Calu3 (cell line): ENCODE measurements at regions of chr14 and their contacts with region 1.

Region 1: GRCh38 chr14:50773632-50774541 is 57.1 kb downstream of the NIN start:
- DNase-seq: peak; percentile 56
- H3K4me3 Mint-ChIP-seq: no peak overlapping the region
- H3K27ac Mint-ChIP-seq: no peak overlapping the region
- H3K4me1 Mint-ChIP-seq: no peaks in the 10 kb centered on the region
- H3K27me3 Mint-ChIP-seq: no peaks in the 10 kb centered on the region
- CTCF ChIP-seq: peak; percentile 68

Region 2: DNA sequence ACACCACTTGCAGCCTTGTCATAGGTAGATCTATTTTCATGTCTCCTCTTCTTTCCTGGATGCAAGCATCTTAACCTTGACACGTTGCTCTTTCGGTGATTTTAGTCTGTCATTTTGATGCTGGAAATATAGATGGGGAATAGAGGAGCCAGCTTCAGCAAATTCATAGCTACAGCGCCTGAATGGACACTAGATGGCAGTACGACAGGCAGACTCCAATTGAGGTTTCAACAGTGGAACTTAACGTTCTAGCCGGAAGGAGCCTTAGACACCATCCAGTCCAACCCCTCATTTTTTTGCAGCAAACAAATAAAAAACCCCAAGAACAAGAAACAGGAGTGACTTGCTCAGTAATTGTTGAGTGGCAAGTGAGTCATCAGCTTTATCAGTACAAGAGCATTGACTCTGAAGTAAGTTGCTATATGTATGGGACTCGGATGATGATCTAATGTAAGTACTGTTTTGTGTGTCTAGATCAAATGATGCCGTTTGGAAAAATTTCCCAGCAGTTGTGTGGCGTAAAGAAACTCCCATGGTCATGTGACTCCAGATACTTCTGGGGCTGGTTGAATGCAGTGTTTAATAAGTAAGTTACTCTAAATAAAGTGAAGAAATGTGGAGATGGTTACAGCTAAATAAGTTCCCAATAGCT is 452.8 kb before region 1 on chr14:
- CTCF ChIA-PET with region 1: interaction called, 3 read pairs
- intact Hi-C with region 1: loop called (anchors 5 kb)
- DNase-seq: peak; percentile 65
- H3K4me3 Mint-ChIP-seq: no peak overlapping the region
- H3K27ac Mint-ChIP-seq: no peak overlapping the region
- H3K4me1 Mint-ChIP-seq: peaks cover 14% of the 10 kb centered on the region
- H3K27me3 Mint-ChIP-seq: no peaks in the 10 kb centered on the region
- CTCF ChIP-seq: peak; percentile 49

Region 3: DNA sequence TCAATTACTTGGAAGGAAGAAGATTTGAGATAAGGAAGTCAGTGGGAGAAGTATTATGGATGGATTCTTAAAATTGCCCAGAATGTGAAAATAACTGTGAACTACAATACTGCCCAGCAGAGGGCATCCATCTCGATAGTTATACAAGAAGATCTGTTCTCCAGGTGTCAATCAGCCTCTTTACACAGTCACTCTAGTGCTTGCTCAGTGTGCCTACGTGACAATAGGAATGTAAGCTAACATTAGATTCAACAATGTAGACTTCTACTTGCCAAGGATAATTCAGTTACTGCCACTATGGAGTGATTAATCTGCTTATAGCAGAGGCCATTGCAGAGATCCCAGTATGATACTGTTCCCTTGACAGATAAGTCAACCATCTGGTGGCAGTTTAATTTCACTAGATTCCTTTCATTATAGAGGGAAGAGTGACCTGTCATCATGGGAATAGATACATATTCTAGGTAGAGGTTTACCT is 230.9 kb before region 1 on chr14:
- CTCF ChIA-PET with region 1: interaction called, 3 read pairs
- intact Hi-C with region 1: loop called (anchors 1 kb)
- DNase-seq: peak; percentile 38
- H3K4me3 Mint-ChIP-seq: no peak overlapping the region
- H3K27ac Mint-ChIP-seq: no peak overlapping the region
- H3K4me1 Mint-ChIP-seq: peaks cover 32% of the 10 kb centered on the region
- H3K27me3 Mint-ChIP-seq: no peaks in the 10 kb centered on the region
- CTCF ChIP-seq: no peak

Region 4: DNA sequence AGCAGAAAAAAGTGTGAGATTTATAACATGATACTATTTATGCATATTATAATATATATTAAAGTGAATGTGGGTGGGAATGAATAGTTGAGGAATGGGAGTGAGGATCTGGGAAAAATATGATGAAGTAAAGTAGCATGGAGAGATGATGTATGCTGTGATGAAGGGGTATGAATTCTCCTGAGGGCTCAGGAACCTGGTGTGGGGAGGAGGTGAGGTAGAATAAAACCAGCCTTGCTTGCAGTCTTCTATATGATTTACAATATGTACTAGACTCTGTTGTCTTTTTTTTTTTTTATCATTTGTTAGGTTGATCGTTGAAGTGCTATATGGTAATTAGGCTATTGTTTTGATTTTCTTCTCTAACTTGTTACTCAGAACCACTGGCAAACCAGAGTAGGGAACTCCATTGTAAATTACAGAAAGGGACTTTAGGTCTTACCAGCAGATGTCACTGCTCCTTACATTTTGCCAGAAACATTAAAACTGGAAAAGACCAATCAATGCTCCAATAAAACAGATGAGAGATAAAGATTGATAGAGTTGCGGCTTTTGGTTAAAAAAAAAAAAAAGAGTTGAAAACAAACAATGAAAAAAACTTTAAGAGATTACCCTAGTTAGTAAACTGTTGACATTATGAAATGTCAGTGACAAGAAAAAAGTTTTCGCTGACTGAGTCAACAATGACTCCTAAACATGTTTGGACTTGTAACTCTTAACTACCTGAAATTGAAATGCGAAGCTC is 174.0 kb before region 1 on chr14:
- CTCF ChIA-PET with region 1: interaction called, 9 read pairs
- intact Hi-C with region 1: loop called (anchors 1 kb)
- DNase-seq: no peak
- H3K4me3 Mint-ChIP-seq: no peak overlapping the region
- H3K27ac Mint-ChIP-seq: no peak overlapping the region
- H3K4me1 Mint-ChIP-seq: no peaks in the 10 kb centered on the region
- H3K27me3 Mint-ChIP-seq: no peaks in the 10 kb centered on the region
- CTCF ChIP-seq: no peak

Region 5: GRCh38 chr14:50619556-50620141 is 154.2 kb before region 1 on chr14:
- CTCF ChIA-PET with region 1: interaction called, 4 read pairs
- intact Hi-C with region 1: loop called (anchors 1 kb)
- DNase-seq: no peak
- H3K4me3 Mint-ChIP-seq: no peak overlapping the region
- H3K27ac Mint-ChIP-seq: no peak overlapping the region
- H3K4me1 Mint-ChIP-seq: no peaks in the 10 kb centered on the region
- H3K27me3 Mint-ChIP-seq: no peaks in the 10 kb centered on the region
- CTCF ChIP-seq: peak; percentile 43

Region 6: DNA sequence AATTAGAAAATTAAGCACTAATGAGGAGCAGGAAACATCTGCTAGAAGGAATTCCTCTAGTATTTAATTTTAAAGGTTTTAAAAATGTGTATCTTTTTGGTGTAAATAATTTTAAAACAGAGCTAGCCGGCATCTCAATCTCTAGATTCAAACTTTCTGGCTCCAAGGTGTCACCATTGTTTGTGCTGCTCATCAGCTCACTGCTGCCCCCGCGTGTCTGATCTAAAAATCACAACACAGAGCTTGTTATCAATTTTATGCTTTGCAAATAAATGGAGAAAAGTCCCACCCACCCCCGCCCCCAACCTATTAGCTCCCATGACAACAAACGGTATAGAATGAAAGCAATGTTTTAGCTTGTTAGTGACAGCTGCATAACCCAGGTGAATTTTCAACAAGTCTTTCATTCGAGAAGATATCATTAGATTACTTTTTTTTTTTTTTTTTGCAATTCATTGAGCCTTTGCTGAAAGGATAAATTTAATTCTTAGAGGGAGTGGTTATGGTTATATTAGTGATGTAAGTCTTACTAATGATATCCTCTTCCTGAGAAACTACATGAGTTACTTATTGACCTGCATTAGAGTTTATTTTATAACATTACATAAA is 86.7 kb after region 1 on chr14:
- CTCF ChIA-PET with region 1: interaction called, 17 read pairs
- intact Hi-C with region 1: no loop called
- DNase-seq: peak; percentile 84
- H3K4me3 Mint-ChIP-seq: peak overlapping the region; percentile 67
- H3K27ac Mint-ChIP-seq: no peak overlapping the region
- H3K4me1 Mint-ChIP-seq: no peaks in the 10 kb centered on the region
- H3K27me3 Mint-ChIP-seq: no peaks in the 10 kb centered on the region
- CTCF ChIP-seq: peak; percentile 55